WTC11 (cell line): ENCODE measurements at regions of chr18 and their contacts with region 1.

Region 1: GRCh38 chr18:22800551-22800951 is 132.6 kb upstream of the RBBP8 start:
- DNase-seq: no peak
- ATAC-seq: no peak
- H3K4me3 Mint-ChIP-seq: no peak overlapping the region
- H3K27ac Mint-ChIP-seq: no peak overlapping the region
- H3K4me1 Mint-ChIP-seq: peaks cover 7% of the 10 kb centered on the region
- H3K27me3 Mint-ChIP-seq: no peaks in the 10 kb centered on the region
- CTCF ChIP-seq: no peak

Region 2: GRCh38 chr18:22789600-22789999 is 11.0 kb before region 1 on chr18:
- CTCF ChIA-PET with region 1: interaction called, 10 read pairs
- POLR2A ChIA-PET with region 1: no interaction called
- DNase-seq: no peak
- ATAC-seq: no peak
- H3K4me3 Mint-ChIP-seq: no peak overlapping the region
- H3K27ac Mint-ChIP-seq: no peak overlapping the region
- H3K4me1 Mint-ChIP-seq: no peaks in the 10 kb centered on the region
- H3K27me3 Mint-ChIP-seq: peaks cover 3% of the 10 kb centered on the region
- CTCF ChIP-seq: no peak

Region 3: DNA sequence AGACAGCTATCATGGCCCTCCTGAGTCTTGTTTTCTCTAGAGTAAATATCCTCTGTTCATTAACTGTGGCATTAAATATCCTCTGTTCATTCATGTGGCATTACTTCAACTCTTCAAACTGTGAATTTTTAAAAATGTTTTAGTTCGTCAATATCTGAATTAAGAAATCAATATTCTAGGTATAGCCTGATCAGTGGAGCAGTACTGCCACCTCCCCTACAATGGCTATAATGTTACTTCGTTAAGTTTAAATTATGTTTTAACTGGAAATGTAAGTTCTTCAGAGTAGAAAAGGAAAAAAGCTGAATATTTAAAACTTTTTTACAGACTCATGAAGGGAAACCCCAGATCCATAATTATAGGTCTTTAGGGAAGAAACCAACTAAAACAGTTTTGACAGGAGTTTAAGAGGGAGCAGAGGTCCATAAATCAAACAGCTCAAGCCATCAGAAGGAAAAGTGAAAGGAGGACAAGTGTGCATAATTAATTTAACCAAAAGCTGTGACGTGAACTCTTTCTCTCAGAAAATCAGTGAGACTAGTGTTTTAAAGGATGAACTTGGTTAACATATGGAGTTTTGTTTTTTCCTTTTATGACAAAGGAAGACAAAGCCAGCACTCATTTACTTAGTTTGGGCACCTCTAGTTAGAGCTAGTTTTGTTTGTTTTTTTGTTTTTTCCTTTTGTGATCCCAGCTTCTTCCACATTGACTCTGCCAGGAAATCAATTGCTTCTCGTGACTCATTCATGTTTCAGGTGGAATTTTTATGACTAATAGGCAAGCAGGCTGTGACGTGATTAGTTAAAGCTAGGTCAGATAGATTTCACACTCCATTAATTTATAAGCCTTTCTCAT is 177.5 kb after region 1 on chr18:
- CTCF ChIA-PET with region 1: interaction called, 45 read pairs
- POLR2A ChIA-PET with region 1: interaction called, 4 read pairs
- DNase-seq: no peak
- ATAC-seq: no peak
- H3K4me3 Mint-ChIP-seq: no peak overlapping the region
- H3K27ac Mint-ChIP-seq: no peak overlapping the region
- H3K4me1 Mint-ChIP-seq: peaks cover 10% of the 10 kb centered on the region
- H3K27me3 Mint-ChIP-seq: no peaks in the 10 kb centered on the region
- CTCF ChIP-seq: no peak

Region 4: GRCh38 chr18:22983175-22983574 is 182.6 kb after region 1 on chr18:
- CTCF ChIA-PET with region 1: interaction called, 45 read pairs
- POLR2A ChIA-PET with region 1: interaction called, 4 read pairs
- DNase-seq: no peak
- ATAC-seq: no peak
- H3K4me3 Mint-ChIP-seq: no peak overlapping the region
- H3K27ac Mint-ChIP-seq: no peak overlapping the region
- H3K4me1 Mint-ChIP-seq: peaks cover 15% of the 10 kb centered on the region
- H3K27me3 Mint-ChIP-seq: no peaks in the 10 kb centered on the region
- CTCF ChIP-seq: 0 out of 2 replicates have a peak, but pooled peaks have one; percentile 26